ENCODE measurements at regions of chr9 and their contacts with region 1.

Region 1: DNA sequence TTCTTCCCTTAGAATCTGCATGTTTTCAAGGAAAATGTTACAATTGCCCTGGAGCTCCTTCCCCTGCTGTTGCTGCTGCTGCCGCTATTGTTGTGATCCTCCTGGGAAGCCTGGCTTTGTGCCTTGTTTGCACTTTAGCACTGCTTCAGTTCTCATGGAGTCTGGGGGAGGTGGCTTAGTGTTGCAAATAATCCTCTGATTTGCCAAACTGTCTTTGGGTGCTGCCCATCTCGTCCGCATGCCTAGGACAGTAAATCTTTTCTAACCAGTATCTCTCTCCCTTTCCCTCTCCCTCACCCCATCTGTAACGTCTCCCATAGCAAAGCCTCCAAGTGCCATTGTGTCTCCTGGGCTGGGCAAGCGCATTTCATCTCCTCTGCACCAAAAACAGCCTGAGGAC is 30.3 kb downstream of the FAM240B start:
- DNase-seq: no peak
- H3K4me3 ChIP-seq: no peak overlapping the region
- H3K27ac ChIP-seq: no peak overlapping the region
- H3K4me1 ChIP-seq: no peaks in the 10 kb centered on the region
- CTCF ChIP-seq: no peak

Region 2: DNA sequence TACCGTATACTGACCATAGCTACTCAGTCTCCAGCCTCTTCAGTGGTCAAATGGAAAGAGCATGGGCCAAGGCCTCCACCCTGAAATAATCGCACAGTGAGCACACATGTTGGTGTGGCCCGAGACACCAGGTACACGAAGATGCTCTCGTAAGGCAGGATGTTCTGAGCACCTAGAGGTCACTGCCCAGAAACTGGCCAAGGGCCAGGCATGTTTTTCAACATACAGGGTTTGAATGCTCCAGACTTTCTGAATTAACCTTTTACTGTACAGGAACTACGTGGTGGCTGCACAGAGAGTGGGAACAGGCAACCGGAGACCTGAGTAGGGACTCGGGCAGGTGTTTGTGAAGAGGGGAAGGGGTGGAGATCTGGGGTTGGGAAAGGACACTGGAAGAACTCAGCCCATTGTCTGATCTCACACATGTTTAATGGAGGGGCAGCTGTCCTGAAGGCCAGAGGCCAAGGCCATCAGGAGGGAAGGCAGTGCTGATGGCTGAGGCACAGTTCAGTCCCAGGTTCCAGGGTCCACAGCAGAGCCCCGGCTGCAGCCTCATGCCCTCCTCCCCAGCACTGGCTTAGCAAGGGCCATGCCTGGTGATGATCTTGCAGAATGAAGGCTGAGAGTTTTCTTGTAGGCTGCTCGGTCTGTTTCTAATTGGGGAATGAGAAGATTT is 20.7 kb before region 1 on chr9:
- CTCF ChIA-PET with region 1: no interaction called
- POLR2A ChIA-PET with region 1: no interaction called
- intact Hi-C with region 1: no loop called
- DNase-seq: no peak
- H3K4me3 ChIP-seq: no peak overlapping the region
- H3K27ac ChIP-seq: no peak overlapping the region
- H3K4me1 ChIP-seq: no peaks in the 10 kb centered on the region
- CTCF ChIP-seq: no peak

Region 3: DNA sequence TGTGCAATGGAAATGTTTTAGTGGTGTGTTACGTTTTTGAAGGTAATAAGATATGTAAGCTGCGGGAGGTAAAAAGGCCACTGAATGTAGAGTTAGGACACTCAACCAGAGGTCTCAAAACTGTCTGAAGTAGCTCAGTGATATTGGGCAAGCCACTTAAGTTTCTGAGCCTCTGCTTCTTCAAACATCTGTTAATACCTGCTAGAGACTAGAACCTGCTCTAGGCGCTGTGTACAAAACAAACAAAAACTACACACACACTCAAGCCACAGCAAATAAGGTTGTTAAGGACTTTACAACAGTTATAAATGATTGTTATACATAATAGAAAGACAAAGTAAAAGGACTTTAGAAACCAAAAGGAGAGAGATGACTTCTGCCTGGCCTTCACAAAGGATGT is 54.8 kb after region 1 on chr9:
- CTCF ChIA-PET with region 1: no interaction called
- POLR2A ChIA-PET with region 1: no interaction called
- intact Hi-C with region 1: loop called (anchors 5 kb)
- DNase-seq: no peak
- H3K4me3 ChIP-seq: no peak overlapping the region
- H3K27ac ChIP-seq: no peak overlapping the region
- H3K4me1 ChIP-seq: no peaks in the 10 kb centered on the region
- CTCF ChIP-seq: no peak

Measured in OCI-LY7 (cell line).